BJ (cell line): ENCODE measurements at regions of chr16 and their contacts with region 1.

Region 1: GRCh38 chr16:2905431-2906387 is 6.0 kb upstream of the FLYWCH1 start:
- DNase-seq: peak; percentile 92
- H3K4me3 ChIP-seq: peak overlapping the region; percentile 73
- H3K27me3 ChIP-seq: no peaks in the 10 kb centered on the region
- CTCF ChIP-seq: no peak

Region 2: GRCh38 chr16:3577302-3577752 is 671.6 kb after region 1 on chr16 and contains the start of gene NLRC3:
- CTCF ChIA-PET with region 1: no interaction called
- POLR2A ChIA-PET with region 1: interaction called, 14 read pairs
- DNase-seq: no peak
- H3K4me3 ChIP-seq: no peak within 1 kb of the TSS
- H3K27me3 ChIP-seq: no peaks in the 10 kb centered on the region
- CTCF ChIP-seq: no peak
- polyA plus RNA-seq, gene NLRC3: not detected in 2 replicates